Activated B cell treated with CpG ODN at 0.5 μM for 24 hours (primary cell): ENCODE measurements at regions of chr5 and their contacts with region 1.

Region 1: DNA sequence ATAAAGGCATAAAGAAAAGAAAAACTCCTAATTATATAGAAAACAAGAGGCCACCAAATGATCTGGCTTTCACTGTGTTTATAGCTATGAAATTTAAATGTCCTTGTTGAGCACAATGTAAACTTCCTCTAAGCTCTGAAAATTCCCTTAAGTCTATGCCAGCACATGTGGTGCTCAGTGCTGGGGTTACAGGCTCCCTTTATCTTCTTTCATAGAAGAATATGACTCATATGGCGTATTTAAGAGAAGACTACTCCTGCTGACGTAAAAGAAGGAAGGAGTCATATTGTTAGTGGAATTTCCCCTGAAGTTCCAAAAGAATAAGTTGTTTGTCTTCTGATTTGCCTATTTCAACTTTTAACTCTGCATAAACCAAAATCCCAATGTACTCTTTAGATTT is 30.4 kb downstream of the RNF145 start:
- DNase-seq: no peak
- ATAC-seq: peak; percentile 74
- H3K4me3 Mint-ChIP-seq: peak overlapping the region; percentile 41
- H3K27ac Mint-ChIP-seq: peak overlapping the region; percentile 93
- H3K4me1 Mint-ChIP-seq: peaks cover 56% of the 10 kb centered on the region
- H3K27me3 Mint-ChIP-seq: no peaks in the 10 kb centered on the region
- CTCF ChIP-seq: no peak

Region 2: GRCh38 chr5:159198063-159199036 is 19.4 kb after region 1 on chr5:
- CTCF ChIA-PET with region 1: interaction called, 4 read pairs
- POLR2A ChIA-PET with region 1: interaction called, 13 read pairs
- intact Hi-C with region 1: loop called (anchors 1 kb)
- DNase-seq: no peak
- ATAC-seq: peak; percentile 98
- H3K4me3 Mint-ChIP-seq: peak overlapping the region; percentile 73
- H3K27ac Mint-ChIP-seq: peak overlapping the region; percentile 91
- H3K4me1 Mint-ChIP-seq: peaks cover 57% of the 10 kb centered on the region
- H3K27me3 Mint-ChIP-seq: no peaks in the 10 kb centered on the region
- CTCF ChIP-seq: no peak

Region 3: DNA sequence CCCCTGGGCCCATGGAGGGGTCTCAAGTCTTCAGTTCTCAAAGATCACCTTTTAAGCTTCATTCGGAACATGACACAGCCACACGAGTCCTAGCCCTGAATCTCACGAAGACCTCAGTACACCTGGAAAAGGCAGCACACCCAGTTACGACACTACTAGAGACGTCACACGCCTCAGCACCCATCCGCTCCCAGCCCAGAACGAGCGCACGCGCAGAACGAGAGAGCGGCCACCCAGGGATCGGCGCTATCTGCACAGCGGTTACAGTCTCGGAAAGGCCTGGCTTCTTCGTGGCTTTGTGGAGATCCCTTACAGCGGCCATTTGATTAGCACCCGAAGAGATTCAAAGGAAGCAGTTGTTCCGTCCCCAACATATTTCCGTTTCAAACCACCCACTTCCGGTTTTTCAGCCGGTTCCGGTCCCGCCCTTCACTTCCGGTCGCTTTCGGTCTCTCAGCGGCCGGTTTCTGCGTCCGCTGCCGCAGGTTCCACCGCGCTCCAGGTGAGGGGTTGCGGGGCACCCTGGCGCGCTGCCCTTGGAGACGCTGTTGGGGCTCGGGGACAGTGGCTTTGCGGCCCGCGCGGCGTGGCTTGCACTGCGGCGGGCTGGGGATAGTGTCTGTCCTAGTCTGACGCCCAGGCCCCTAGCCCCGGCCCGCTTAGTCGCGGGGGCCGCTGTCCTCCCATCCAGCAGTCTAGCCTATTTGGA is 84.0 kb after region 1 on chr5 and contains the start of gene UBLCP1:
- CTCF ChIA-PET with region 1: no interaction called
- POLR2A ChIA-PET with region 1: no interaction called
- intact Hi-C with region 1: loop called (anchors 1 kb)
- DNase-seq: peak; percentile 78
- ATAC-seq: peak; percentile 83
- H3K4me3 Mint-ChIP-seq: peak within 1 kb of the TSS; percentile 99
- H3K27ac Mint-ChIP-seq: peak within 1 kb of the TSS; percentile 99
- H3K4me1 Mint-ChIP-seq: peaks cover 39% of the 10 kb centered on the region
- H3K27me3 Mint-ChIP-seq: no peaks in the 10 kb centered on the region
- CTCF ChIP-seq: no peak
- total RNA-seq, gene UBLCP1: 40.3 and 44.8 TPM in 2 replicates

Region 4: DNA sequence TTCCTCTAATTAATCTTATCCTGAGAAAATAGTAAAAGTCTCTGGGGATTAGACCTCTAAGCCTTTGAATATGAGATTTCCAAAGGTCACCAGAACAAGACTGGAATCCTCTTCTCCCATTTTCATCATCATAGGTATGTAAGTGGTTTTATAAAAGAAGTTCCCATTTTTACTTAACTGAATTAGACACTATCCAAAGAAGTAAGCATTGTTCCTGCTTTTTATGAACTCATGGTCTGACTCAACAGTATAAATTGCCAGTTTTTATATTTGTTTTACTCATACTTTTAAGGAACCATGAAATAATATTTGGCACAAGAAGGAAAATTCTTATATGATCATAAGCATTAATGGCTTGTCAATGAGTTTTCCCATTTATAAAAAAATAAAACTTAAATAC is 570.2 kb after region 1 on chr5:
- CTCF ChIA-PET with region 1: no interaction called
- POLR2A ChIA-PET with region 1: no interaction called
- intact Hi-C with region 1: no loop called
- DNase-seq: no peak
- ATAC-seq: no peak
- H3K4me3 Mint-ChIP-seq: no peak overlapping the region
- H3K27ac Mint-ChIP-seq: no peak overlapping the region
- H3K4me1 Mint-ChIP-seq: peaks cover 11% of the 10 kb centered on the region
- H3K27me3 Mint-ChIP-seq: no peaks in the 10 kb centered on the region
- CTCF ChIP-seq: no peak